ENCODE measurements at regions of chr12 and their contacts with region 1.

Region 1: DNA sequence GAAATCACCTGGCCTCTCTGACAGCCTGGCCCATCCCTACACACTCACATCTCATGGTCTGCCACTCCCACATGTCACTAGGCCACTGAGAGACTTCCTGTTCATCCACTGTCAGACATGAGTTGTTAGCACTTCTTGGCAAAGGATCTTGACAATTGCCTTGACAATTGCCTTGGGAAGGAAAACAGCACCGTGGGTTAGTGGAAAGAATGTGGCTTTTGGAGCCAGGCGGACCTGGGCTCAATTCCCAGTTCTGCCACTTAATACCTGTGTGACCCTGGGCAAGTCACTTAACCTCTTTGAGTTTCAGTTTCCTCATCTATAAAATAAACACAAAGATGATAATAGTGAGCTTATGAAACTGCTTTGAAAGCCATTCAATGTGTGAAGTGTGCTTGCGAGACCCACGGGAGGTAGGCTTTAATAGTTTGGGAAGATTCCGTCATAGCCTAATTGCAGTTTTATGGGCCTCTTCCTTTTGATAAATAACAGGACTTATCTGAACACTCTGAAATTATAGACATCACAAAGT is 250.4 kb downstream of the C12orf75 start:
- DNase-seq: no peak

Region 2: GRCh38 chr12:105672121-105672975 is 91.5 kb after region 1 on chr12:
- intact Hi-C with region 1: loop called (anchors 10 kb)
- DNase-seq: peak; percentile 86

Measured in cardiac septum (tissue), 1 donor.